Activated CD4-positive, alpha-beta T cell treated with anti-CD3 and anti-CD28 coated beads for 36 hours (primary cell): ENCODE measurements at regions of chr19 and their contacts with region 1.

Region 1: DNA sequence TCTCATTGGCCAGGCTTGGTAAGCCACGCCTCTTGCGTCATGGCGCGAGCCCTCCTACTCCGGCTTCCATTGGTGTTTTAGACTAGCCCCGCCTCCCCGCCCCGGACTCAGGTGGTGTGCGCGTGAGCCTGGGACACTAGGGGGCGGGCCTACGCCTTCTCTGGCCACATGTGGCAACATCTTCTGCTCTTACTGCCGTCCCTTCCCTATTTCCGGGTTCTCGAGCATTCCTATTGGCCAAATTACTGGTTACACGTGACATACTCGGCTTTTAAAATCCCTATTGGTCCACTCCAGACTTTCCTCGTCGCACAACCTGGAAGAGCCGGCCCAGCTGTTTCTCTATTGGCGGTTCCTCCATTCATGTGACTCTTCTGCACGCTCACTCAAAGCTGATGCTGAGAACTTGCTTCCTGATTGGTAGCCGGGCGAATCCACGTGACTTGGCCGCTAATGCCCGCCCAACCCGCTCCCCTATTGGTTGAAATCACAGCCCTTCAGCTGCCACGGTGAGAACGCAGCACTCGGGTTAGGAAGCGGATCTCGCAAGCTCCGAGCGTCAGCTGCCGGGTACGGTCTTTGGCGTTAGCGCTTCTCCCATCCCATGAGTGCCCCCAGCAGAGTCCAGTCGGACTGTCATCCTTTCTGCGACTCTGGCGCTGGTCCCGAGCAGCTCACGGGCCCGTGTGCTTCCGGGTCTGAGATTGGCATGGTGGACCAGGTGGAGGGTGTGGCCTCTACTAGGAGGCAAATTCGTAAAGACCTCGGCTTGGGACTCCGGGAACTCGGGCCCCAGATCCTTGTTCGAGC is at the start of gene BLOC1S3:
- DNase-seq: peak; percentile 100
- ATAC-seq: peak; percentile 90
- H3K4me3 Mint-ChIP-seq: peak within 1 kb of the TSS; percentile 91
- H3K27ac Mint-ChIP-seq: peak within 1 kb of the TSS; percentile 94
- H3K4me1 Mint-ChIP-seq: peaks cover 29% of the 10 kb centered on the region
- H3K27me3 Mint-ChIP-seq: no peaks in the 10 kb centered on the region
- total RNA-seq, gene BLOC1S3: 10.7 to 11.2 TPM

Region 2: GRCh38 chr19:44746946-44747738 is 431.3 kb before region 1 on chr19:
- CTCF ChIA-PET with region 1: no interaction called
- POLR2A ChIA-PET with region 1: no interaction called
- intact Hi-C with region 1: loop called in 1 of 2 experiments (anchors 2 kb)
- DNase-seq: peak; percentile 98
- ATAC-seq: peak; percentile 85
- H3K4me3 Mint-ChIP-seq: peak overlapping the region; percentile 91
- H3K27ac Mint-ChIP-seq: peak overlapping the region; percentile 95
- H3K4me1 Mint-ChIP-seq: peaks cover 43% of the 10 kb centered on the region
- H3K27me3 Mint-ChIP-seq: no peaks in the 10 kb centered on the region

Region 3: DNA sequence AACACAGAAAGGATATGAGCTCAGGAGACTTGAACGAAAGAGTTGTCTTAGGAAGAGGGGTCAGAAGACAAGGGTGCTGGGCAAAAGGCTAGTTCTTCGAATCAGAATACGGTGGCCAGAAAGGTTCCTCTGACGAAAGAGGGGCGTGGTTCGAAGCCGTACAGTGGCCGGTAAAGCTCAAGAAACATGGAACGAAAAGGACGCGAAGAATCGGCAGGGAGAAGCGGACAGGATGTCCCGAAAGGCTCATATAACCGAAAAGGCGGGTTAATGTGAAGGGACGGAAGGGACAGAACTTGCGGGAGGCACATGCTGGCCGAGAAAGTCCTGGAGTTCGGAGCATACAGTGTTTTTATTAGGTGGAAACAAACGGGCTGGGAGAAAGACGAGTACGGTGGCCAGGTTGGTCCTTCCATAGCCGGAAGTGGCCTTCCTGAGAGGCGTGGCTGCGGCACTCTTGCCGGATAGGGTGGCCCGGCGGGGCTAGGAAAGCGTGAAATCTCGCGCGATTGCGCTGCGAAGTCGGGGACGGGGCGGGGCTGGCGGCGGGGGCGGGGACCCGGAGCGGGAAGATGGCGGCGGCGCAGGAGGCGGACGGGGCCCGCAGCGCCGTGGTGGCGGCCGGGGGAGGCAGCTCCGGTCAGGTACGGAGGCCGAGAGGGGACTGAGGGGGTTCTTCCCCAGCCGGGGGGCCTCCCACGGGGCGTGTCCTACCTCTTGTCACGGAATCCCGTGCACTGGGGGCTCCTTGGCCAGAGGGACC is 223.5 kb before region 1 on chr19 and contains the start of gene CLPTM1:
- CTCF ChIA-PET with region 1: no interaction called
- POLR2A ChIA-PET with region 1: interaction called, 4 read pairs
- intact Hi-C with region 1: loop called in 1 of 2 experiments (anchors 1 kb)
- DNase-seq: peak; percentile 99
- ATAC-seq: peak; percentile 94
- H3K4me3 Mint-ChIP-seq: peak within 1 kb of the TSS; percentile 95
- H3K27ac Mint-ChIP-seq: peak within 1 kb of the TSS; percentile 100
- H3K4me1 Mint-ChIP-seq: peaks cover 39% of the 10 kb centered on the region
- H3K27me3 Mint-ChIP-seq: no peaks in the 10 kb centered on the region
- total RNA-seq, gene CLPTM1: 41.6 to 44.1 TPM

Region 4: DNA sequence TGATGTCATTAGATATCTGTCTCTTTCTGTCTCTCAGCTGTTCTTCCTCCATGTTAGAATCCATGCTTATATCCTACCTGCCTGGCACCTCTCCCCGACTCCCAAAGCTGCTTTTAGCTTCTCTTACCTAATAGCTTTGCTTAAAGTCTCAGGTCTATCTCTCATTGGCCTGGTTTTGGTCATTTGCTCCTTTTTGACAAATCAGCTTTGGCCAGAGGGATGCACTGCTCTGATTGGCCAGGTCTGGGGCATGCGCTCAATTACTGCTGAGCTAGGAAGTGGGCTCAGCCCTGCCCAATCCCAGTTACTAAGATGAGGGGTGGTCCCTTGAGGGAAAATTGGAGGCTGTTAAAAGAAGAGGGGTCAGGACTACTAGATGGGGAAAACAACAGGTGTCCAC is 151.1 kb before region 1 on chr19:
- CTCF ChIA-PET with region 1: no interaction called
- POLR2A ChIA-PET with region 1: no interaction called
- intact Hi-C with region 1: no loop called
- DNase-seq: no peak
- ATAC-seq: no peak
- H3K4me3 Mint-ChIP-seq: no peak overlapping the region
- H3K27ac Mint-ChIP-seq: no peak overlapping the region
- H3K4me1 Mint-ChIP-seq: no peaks in the 10 kb centered on the region
- H3K27me3 Mint-ChIP-seq: no peaks in the 10 kb centered on the region

Region 5: GRCh38 chr19:45092747-45093678 is 85.5 kb before region 1 on chr19 and contains the start of gene PPP1R37:
- CTCF ChIA-PET with region 1: interaction called, 4 read pairs
- POLR2A ChIA-PET with region 1: interaction called, 3 read pairs
- intact Hi-C with region 1: loop called (anchors 1 kb)
- DNase-seq: peak; percentile 95
- ATAC-seq: peak; percentile 71
- H3K4me3 Mint-ChIP-seq: peak within 1 kb of the TSS; percentile 89
- H3K27ac Mint-ChIP-seq: peak within 1 kb of the TSS; percentile 97
- H3K4me1 Mint-ChIP-seq: peaks cover 54% of the 10 kb centered on the region
- H3K27me3 Mint-ChIP-seq: no peaks in the 10 kb centered on the region
- total RNA-seq, gene PPP1R37: 12.5 to 14.1 TPM

Region 6: GRCh38 chr19:45195764-45196163 is 17.3 kb after region 1 on chr19:
- CTCF ChIA-PET with region 1: no interaction called
- POLR2A ChIA-PET with region 1: no interaction called
- intact Hi-C with region 1: no loop called
- DNase-seq: no peak
- ATAC-seq: no peak
- H3K4me3 Mint-ChIP-seq: no peak overlapping the region
- H3K27ac Mint-ChIP-seq: no peak overlapping the region
- H3K4me1 Mint-ChIP-seq: no peaks in the 10 kb centered on the region
- H3K27me3 Mint-ChIP-seq: no peaks in the 10 kb centered on the region

Region 7: DNA sequence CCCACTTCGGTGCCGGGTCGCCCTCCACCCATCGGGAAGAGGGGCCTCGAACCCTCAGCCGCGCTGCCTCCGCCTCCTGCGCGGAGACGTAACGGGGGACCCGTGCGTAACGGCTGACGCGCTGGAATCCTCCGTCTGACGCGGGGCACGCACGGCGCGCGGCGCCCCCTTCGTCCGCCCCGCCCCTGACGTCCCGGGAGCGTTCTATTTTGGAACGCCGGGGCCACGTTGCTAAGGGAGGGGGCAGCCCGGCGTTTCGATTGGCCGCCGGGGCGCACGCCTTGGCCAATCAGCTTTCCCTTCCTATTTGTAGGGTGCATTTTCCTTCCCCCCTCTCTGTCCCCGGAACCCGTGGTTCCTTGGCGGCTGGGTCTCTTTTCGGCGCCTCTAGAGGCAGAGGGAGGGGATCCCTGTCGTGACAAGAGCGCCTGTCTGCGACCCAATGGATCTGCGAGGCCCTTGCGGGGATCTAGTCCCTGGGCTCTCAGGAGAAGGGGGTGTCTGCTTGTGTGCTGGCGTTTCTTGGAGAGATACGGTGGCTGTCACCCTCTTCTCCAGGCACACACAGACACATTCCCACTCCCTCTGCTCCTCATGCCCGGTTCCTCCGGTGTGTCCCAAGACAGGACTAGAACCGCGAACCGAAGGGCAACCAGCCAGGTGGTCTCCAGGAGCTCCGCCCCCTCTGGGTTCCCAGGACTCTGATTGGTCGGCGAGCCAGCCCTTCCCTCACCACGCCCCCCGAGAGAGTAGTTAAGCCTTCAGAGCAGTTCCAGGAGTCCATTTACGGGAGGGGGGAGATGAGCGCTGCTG is 290.9 kb after region 1 on chr19:
- CTCF ChIA-PET with region 1: interaction called, 3 read pairs
- POLR2A ChIA-PET with region 1: no interaction called
- intact Hi-C with region 1: loop called in 1 of 2 experiments (anchors 1 kb)
- DNase-seq: peak; percentile 97
- ATAC-seq: peak; percentile 82
- H3K4me3 Mint-ChIP-seq: peak overlapping the region; percentile 78
- H3K27ac Mint-ChIP-seq: peak overlapping the region; percentile 86
- H3K4me1 Mint-ChIP-seq: peaks cover 29% of the 10 kb centered on the region
- H3K27me3 Mint-ChIP-seq: peaks cover 11% of the 10 kb centered on the region

Region 8: DNA sequence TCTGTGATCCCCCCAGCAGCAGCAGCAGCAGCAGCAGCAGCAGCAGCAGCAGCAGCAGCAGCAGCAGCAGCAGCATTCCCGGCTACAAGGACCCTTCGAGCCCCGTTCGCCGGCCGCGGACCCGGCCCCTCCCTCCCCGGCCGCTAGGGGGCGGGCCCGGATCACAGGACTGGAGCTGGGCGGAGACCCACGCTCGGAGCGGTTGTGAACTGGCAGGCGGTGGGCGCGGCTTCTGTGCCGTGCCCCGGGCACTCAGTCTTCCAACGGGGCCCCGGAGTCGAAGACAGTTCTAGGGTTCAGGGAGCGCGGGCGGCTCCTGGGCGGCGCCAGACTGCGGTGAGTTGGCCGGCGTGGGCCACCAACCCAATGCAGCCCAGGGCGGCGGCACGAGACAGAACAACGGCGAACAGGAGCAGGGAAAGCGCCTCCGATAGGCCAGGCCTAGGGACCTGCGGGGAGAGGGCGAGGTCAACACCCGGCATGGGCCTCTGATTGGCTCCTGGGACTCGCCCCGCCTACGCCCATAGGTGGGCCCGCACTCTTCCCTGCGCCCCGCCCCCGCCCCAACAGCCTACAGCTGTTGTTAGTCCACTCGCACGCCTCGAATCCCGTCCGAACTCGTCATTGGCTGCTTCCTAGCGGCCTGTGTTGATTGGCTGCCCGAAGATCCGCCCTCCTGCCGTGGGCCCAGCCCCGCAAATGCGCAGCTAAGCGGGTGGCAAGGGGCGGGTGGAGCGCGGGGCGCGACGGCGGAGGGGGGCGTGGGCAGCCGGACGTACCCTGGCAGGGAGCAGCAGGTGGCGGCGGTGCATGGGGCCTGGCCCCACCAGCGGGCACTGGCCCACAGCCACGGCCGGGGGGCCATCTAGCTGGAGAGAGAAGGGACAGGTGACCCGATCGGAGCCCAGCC is 592.0 kb after region 1 on chr19:
- CTCF ChIA-PET with region 1: no interaction called
- POLR2A ChIA-PET with region 1: no interaction called
- intact Hi-C with region 1: loop called in 1 of 2 experiments (anchors 1 kb)
- DNase-seq: peak; percentile 93
- ATAC-seq: peak; percentile 68
- H3K4me3 Mint-ChIP-seq: peak overlapping the region; percentile 78
- H3K27ac Mint-ChIP-seq: no peak overlapping the region
- H3K4me1 Mint-ChIP-seq: peaks cover 10% of the 10 kb centered on the region
- H3K27me3 Mint-ChIP-seq: peaks cover 10% of the 10 kb centered on the region